AG04449 (cell line): ENCODE measurements at regions of chr11 and their contacts with region 1.

Region 1: DNA sequence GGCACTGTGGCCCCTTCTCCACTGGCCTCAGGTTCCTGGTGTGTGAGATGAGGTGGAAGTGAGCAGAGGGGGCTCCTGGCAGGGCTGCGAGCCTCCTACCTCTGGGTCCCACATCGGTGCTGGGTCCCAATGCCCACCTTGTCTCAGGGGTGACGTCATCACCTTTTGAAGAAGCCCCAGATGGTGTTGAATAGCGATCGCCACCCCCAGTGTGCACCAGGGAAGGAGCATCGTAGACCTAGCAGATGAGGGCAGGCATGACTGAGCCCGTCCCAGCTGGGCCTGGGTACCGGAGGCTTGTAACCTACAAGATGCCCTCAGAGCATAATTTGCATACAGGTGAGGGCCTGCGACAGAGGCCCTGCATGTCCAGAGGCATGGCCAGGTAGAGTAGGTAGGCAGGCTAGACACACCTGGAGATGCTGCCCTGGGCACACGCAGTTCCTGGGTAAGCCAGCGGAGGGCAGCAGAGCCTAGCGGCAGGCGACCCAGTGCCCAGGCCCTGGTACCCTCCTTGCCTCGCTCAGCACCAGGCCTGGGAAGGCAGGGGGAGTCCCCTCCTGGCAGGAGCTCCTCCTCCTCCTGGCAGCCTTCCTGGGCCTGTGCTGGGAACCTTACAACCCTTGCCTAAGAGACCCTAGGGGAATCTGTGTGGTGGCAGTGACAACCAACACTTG is 52.5 kb downstream of the TPCN2 start:
- DNase-seq: no peak
- H3K4me3 ChIP-seq: no peak overlapping the region
- CTCF ChIP-seq: peak; percentile 99

Region 2: DNA sequence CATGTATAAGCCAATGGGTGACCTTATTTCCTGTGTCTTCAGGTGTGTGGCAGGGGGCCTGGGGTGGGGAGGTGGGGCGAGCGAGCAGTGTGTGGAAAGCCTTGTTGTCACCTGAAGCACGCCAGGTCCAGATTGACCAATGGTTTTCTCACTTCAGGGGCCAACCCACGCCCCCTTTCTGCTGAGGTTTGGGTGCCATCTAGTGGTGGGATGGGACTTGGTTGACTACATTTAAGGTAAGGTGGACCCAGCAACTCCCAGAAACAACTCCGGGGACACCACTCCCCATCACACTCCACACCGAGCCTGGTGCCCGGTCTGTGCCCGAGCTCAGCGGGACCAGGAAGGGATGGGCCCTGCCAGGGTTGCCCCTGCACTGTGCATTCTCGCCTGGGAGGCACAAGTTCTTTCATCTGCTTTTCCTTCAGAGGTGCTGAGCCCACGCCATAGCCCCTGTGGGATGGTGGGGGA is 12.5 kb before region 1 on chr11:
- CTCF ChIA-PET with region 1: interaction called, 44 read pairs
- POLR2A ChIA-PET with region 1: no interaction called
- DNase-seq: no peak
- H3K4me3 ChIP-seq: no peak overlapping the region
- CTCF ChIP-seq: peak; percentile 77

Region 3: GRCh38 chr11:69131644-69132300 is 30.5 kb after region 1 on chr11:
- CTCF ChIA-PET with region 1: interaction called, 14 read pairs
- POLR2A ChIA-PET with region 1: no interaction called
- DNase-seq: peak; percentile 17
- H3K4me3 ChIP-seq: no peak overlapping the region
- CTCF ChIP-seq: peak; percentile 88

Region 4: DNA sequence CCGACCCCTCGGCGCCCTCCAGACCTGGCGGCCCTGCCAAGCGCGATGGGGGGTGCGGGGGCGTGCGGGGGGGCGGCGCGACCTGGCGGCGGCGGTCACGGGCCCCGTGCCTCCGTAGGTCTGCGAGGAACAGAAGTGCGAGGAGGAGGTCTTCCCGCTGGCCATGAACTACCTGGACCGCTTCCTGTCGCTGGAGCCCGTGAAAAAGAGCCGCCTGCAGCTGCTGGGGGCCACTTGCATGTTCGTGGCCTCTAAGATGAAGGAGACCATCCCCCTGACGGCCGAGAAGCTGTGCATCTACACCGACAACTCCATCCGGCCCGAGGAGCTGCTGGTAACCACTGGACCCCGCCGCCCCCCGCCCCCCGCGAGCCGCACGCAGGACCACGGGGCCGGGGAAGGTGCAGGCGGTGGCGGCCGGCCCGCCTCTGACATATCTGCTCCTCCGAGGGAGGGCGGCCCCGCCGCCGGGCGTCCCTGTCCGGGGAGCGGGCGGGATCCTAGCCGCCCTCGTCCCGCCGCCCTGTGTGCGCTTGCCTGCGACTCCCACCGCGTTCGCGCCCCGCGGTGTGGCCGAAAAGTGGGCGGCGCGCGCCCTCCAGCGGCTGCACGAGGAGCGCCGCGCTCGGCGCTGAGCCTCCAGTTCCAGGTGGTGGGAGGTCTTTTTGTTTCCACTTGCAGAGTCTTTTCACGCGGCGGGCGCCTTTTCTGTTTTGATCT is 541.8 kb after region 1 on chr11:
- CTCF ChIA-PET with region 1: interaction called, 168 read pairs
- POLR2A ChIA-PET with region 1: interaction called, 6 read pairs
- DNase-seq: no peak
- H3K4me3 ChIP-seq: peak overlapping the region; percentile 99
- CTCF ChIP-seq: peak; percentile 89

Region 5: DNA sequence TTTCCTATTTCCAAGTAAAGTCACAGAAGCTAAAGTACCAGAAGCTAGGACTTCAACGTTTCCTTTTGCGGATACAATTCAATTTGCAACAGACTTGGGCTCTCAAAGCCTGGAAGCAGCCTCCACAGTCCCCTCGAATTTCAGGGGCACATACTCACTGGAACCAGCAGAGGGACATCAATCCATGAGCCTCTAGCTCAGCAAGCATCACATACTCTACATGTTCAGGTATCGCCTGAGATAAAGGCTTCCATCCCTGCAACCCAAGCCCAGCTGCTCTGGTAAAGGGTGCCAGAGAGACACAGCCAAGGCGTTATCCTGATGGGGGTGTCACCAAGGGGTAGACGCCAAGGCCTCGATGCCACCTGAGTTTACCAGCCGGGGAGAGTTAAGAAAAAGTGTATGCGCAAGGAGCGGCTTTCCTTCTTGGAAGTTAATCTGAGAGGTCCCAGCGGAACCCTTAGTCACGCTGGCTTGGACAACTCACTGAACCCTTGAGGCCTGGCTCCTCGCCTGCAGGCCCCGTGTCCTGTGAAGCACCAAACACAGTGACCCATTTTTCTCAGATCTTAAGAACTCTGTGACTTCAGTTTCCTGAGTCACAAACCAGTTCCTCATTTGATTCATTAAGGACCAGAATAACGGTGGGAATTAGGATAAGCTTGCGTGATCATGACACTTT is 560.9 kb after region 1 on chr11:
- CTCF ChIA-PET with region 1: interaction called, 188 read pairs
- POLR2A ChIA-PET with region 1: interaction called, 3 read pairs
- DNase-seq: no peak
- H3K4me3 ChIP-seq: no peak overlapping the region
- CTCF ChIP-seq: no peak

Region 6: DNA sequence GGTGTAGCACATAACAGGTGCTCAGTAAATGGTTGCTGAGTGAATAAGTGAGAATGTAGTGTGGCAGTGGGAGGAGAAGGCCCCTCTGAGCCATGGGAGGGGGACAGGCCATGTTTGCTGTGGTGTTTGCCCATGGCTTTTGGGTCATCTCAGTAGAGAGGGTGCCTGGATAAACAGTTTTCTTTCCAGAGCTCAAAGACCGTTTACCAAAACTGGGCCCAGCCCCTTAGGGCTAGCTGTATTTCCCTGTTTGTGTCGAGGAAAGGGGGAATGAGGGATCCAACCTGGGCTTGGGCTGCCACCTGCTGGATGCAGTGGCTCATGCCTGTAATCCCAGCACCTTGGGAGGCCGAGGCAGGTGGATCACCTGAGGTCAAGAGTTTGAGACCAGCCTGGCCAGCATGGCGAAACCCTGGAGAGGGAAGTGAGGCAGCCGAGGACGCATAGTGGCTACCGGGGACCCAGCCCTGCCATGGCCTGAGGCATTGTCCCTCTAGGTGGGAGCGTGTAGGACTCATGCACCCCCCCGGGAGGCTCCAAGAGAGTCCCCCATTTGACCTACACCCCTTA is 582.6 kb after region 1 on chr11:
- CTCF ChIA-PET with region 1: interaction called, 13 read pairs
- POLR2A ChIA-PET with region 1: no interaction called
- DNase-seq: no peak
- H3K4me3 ChIP-seq: no peak overlapping the region
- CTCF ChIP-seq: peak; percentile 25